Tibial artery (tissue), 4 donors: ENCODE measurements at regions of chrX and their contacts with region 1.

Region 1: DNA sequence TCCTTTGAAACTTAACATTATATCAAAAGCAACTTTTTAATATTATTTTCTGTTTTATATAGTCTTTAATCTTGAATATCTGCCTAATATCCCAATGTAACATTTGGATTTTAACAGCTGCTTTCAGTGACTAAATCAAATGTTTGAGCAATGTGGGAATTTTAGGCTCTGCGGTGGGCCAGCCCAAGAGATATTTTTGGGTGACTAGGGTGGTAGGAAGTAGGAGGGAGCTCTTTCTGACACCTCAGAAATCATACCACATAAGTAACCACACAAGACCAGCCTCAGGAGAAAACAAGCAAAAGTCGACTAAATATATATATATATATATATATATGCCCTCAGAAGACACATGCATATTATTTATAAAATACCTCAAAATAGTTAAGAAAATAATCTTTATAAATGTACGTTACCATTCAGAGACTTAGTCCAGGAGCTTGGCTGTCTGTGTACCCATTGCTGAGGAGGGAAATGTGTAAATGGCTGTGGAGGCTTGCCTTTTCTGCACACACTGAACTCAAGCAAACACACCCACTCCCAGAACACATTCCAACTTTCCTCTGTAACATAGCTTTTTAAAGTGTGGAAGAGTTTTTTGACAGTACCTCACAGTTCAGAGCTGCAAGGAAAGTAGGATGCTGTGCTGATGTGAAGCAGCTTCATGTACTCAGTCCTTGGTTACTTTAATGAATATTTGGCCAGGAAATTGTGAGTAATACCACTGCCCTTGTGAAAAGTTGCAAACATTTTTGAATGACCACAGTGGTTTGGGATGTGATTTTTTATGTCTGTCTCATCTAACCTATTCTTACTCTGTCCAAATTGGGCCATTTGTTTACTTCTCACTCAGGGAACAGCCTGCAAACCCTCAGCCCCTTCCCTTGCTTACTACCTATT is at the start of gene RTL3:
- DNase-seq: no peak
- H3K4me3 ChIP-seq: no peak within 1 kb of the TSS
- H3K27ac ChIP-seq: peak within 1 kb of the TSS; percentile 44 to 59
- H3K4me1 ChIP-seq: peaks cover 0 to 16% (median 0%) of the 10 kb centered on the region in 4 donors
- H3K27me3 ChIP-seq: no peaks in the 10 kb centered on the region
- CTCF ChIP-seq: no peak

Region 2: GRCh38 chrX:78346826-78347225 is 312.3 kb before region 1 on chrX:
- intact Hi-C with region 1: no loop called
- DNase-seq: no peak
- H3K4me3 ChIP-seq: no peak overlapping the region
- H3K27ac ChIP-seq: no peak overlapping the region
- H3K4me1 ChIP-seq: no peaks in the 10 kb centered on the region
- H3K27me3 ChIP-seq: no peaks in the 10 kb centered on the region
- CTCF ChIP-seq: no peak

Region 3: DNA sequence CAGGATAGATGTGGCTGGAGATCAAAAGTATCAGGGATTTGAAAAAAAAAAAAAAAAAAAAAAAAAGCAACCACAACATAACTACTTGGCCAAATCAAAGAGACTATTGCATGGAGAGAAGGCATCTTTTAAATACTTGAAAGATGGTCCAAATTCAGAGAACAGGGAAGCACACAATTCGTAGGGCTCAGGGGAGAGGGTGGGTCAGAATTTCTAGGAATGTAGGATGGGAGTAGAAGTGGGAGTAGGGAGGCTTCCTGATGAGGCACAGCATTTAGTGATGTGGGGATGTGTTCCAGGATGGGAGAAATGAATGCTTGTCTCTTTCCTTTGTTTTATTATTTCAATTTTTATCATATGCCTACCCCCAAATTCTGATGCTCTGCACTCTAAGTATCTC is 36.3 kb before region 1 on chrX:
- intact Hi-C with region 1: loop called (anchors 2 kb)
- DNase-seq: no peak
- H3K4me3 ChIP-seq: no peak overlapping the region
- H3K27ac ChIP-seq: no peak overlapping the region
- H3K4me1 ChIP-seq: no peaks in the 10 kb centered on the region
- H3K27me3 ChIP-seq: no peaks in the 10 kb centered on the region
- CTCF ChIP-seq: no peak